ENCODE measurements at regions of chr14 and their contacts with region 1.

Region 1: GRCh38 chr14:24093901-24094761 is at the start of gene PCK2:
- DNase-seq: peak; percentile 79 to 87 (median 84)
- H3K4me3 ChIP-seq: peak within 1 kb of the TSS; percentile 48 to 86 (median 77)
- H3K27ac ChIP-seq: peak within 1 kb of the TSS; percentile 80 to 90
- H3K4me1 ChIP-seq: peaks cover 0 to 37% (median 29%) of the 10 kb centered on the region in 4 experiments
- H3K27me3 ChIP-seq: no peaks in the 10 kb centered on the region

Region 2: DNA sequence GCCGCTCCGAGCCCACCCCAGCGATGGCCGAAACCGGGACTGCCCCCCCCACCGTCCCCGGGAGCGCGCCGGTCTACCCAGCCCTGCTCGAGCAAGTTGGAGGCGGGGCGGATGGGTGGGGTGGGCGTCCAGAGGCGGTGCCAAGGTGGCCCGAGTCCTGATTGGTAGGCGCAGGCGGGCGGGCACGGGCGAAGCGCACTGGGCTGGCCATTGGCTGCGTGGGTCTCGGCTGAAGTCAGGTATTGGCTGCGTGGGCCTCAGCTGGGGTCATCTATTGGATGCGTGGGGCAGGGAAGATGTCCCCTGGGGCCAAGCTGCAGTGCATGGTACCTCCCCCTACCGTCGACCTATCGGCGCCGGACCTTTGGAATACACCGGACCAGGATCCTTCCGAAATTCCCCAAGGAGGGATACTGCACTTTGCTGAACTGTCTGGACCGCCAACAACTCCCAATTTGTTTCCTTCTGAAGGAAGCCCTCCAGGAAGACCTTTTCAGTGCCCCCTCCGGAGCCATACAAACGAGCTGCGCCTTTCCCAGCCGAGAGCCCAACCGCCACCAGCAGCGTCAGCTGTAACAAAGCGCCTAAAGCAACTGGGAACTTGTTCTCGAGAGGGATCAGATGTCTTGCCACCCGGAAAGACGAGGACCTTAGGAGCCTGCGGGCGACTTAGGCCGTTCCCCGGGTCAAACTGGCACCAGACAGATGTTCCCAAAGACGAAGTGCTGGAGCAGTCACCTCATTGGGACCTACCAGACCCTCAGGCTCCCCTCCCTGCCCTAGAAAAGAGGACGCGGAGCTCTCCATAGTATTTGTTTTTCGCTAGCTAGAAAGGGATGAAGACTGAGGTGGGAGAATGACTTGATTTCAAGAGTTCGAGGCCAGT is 807.9 kb before region 1 on chr14 and contains the start of gene HOMEZ:
- CTCF ChIA-PET with region 1: no interaction called
- POLR2A ChIA-PET with region 1: no interaction called
- DNase-seq: peak; percentile 97 to 98 (median 98)
- H3K4me3 ChIP-seq: peak within 1 kb of the TSS; percentile 59 to 96 (median 95)
- H3K27ac ChIP-seq: peak within 1 kb of the TSS; percentile 76 to 91
- H3K4me1 ChIP-seq: peaks cover 11 to 22% (median 15%) of the 10 kb centered on the region in 4 experiments
- H3K27me3 ChIP-seq: no peaks in the 10 kb centered on the region

Region 3: DNA sequence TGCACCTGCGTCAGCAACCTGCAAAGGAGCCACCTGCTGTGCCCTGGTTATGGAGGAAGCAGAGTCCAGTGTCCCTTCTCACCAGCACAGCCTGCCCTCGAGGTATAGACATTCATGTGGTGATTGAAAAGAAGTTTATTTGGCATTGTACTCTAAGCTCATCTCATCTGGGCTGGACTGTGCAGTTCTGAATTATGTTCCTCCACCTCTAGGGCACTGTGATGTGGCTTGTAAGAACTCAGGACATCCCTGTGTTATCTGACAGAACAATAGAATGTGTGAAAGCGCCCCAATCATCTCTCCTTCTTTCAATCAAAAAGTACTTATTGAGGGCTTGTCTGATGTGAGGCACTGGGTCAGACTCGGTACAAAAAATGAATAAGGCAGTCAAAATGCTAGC is 317.8 kb before region 1 on chr14:
- CTCF ChIA-PET with region 1: no interaction called
- POLR2A ChIA-PET with region 1: no interaction called
- DNase-seq: no peak
- H3K4me3 ChIP-seq: no peak overlapping the region
- H3K27ac ChIP-seq: no peak overlapping the region
- H3K4me1 ChIP-seq: no peaks in the 10 kb centered on the region
- H3K27me3 ChIP-seq: no peaks in the 10 kb centered on the region

Region 4: GRCh38 chr14:24058260-24058950 is 35.7 kb before region 1 on chr14:
- CTCF ChIA-PET with region 1: interaction called, 178 read pairs
- POLR2A ChIA-PET with region 1: interaction called, 3 read pairs
- DNase-seq: peak in 2 of 3 donors; percentile 20 to 42
- H3K4me3 ChIP-seq: no peak overlapping the region
- H3K27ac ChIP-seq: no peak overlapping the region
- H3K4me1 ChIP-seq: no peaks in the 10 kb centered on the region
- H3K27me3 ChIP-seq: peaks cover 0 to 7% (median 1%) of the 10 kb centered on the region in 5 experiments

Region 5: GRCh38 chr14:24075485-24076301 is 18.4 kb before region 1 on chr14:
- CTCF ChIA-PET with region 1: interaction called, 64 read pairs
- POLR2A ChIA-PET with region 1: no interaction called
- DNase-seq: no peak
- H3K4me3 ChIP-seq: no peak overlapping the region
- H3K27ac ChIP-seq: no peak overlapping the region
- H3K4me1 ChIP-seq: peaks cover 4 to 15% (median 14%) of the 10 kb centered on the region in 4 experiments
- H3K27me3 ChIP-seq: peaks cover 0 to 3% (median 0%) of the 10 kb centered on the region in 5 experiments

Region 6: DNA sequence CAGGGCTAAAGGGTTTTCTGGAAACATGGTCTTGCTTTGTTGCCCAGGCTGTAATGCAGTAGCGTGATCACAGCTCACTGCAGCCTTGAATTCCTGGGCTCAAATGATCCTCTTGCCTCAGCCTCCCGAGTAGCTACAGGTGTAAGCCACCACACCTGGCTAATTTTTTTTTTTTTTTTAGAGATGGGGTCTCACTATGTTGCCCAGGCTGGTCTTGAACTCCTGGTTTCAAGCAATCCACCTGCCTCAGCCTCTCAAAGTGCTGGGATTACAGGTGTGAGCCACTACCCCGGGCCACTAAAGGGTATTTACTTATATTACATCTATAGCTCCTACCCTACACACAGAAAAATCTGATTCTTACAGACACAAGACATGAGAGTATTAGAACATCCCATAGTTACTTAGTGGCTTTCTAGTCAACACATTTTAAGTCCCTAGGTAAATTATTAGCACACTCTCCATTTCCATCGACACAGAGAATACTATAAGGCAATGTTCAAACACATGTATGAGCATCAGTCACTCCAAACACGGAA is 14.3 kb after region 1 on chr14:
- CTCF ChIA-PET with region 1: interaction called, 83 read pairs
- POLR2A ChIA-PET with region 1: interaction called, 12 read pairs
- DNase-seq: no peak
- H3K4me3 ChIP-seq: peak overlapping the region in 1 of 7 experiments; percentile 38
- H3K27ac ChIP-seq: peak overlapping the region in 1 of 2 experiments; percentile 17
- H3K4me1 ChIP-seq: peaks cover 3 to 20% (median 9%) of the 10 kb centered on the region in 4 experiments
- H3K27me3 ChIP-seq: no peaks in the 10 kb centered on the region

Region 7: GRCh38 chr14:24195191-24196070 is 101.3 kb after region 1 on chr14 and contains the start of gene TM9SF1:
- CTCF ChIA-PET with region 1: no interaction called
- POLR2A ChIA-PET with region 1: no interaction called
- DNase-seq: peak; percentile 93 to 96 (median 95)
- H3K4me3 ChIP-seq: peak within 1 kb of the TSS; percentile 77 to 96 (median 84)
- H3K27ac ChIP-seq: peak within 1 kb of the TSS; percentile 90 to 97
- H3K4me1 ChIP-seq: peaks cover 4 to 32% (median 25%) of the 10 kb centered on the region in 4 experiments
- H3K27me3 ChIP-seq: no peaks in the 10 kb centered on the region

Region 8: DNA sequence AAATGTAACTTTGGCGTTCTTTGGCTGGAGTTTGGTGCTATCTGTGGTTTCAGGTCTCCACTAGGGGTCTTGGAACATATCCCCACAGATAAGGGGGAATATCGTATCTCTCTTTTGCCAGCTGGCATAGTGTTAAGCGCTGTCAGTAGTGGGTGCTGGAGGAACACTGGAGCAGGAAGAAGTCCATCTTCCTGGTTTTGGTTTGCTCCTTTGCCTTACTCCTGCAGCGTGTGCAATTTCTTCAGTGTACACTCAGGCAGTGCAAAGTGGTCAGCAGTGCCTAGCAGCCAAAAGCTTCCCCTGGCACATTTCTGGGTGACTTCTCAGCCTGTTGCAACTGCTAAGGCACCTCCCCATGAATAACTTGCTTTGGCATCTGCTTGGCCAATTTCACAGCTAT is 257.4 kb after region 1 on chr14:
- CTCF ChIA-PET with region 1: no interaction called
- POLR2A ChIA-PET with region 1: no interaction called
- DNase-seq: peak in 2 of 3 donors; percentile 33 to 47
- H3K4me3 ChIP-seq: no peak overlapping the region
- H3K27ac ChIP-seq: no peak overlapping the region
- H3K4me1 ChIP-seq: no peaks in the 10 kb centered on the region
- H3K27me3 ChIP-seq: peaks cover 0 to 2% (median 0%) of the 10 kb centered on the region in 5 experiments

Measured in common myeloid progenitor, CD34-positive (primary cell).